ENCODE measurements at regions of chr12 and their contacts with region 1.

Region 1: DNA sequence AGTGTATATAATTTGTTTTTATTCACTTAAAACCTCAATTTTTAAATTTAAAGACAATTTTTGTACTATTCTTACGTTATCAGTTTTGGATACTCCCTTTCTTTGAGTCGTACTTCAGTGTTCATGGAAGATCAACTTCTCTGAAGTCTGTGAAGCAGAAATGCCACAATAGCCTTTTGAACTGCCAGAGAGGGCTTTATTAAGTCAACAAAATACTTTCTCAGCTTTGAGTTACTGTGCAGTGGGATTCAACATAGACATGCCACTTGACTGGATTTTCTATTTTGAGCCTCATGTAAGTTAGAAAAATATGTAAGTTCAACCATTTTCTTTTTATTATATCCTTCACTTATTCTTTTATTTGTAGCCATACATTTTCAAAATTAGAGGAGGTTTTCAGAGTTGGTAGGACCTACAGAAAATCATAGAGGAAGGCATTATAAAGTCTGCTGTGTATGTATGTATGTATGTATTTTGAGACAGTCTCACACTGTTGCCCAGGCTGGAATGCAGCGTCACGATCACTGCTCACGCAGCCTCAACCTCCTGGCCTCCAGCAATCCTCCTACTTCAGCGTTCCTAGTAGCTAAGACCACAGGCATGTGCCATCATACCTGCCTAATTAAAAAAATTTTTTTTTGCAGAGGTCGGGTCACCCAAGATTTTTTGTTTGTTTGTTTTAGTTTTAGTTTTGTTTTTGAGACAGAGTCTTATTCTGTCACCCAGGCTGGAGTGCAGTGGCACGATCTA is 31.2 kb upstream of the BCAT1 start:
- DNase-seq: no peak
- H3K4me3 ChIP-seq: no peak overlapping the region
- H3K27ac ChIP-seq: no peak overlapping the region
- H3K4me1 ChIP-seq: no peaks in the 10 kb centered on the region
- H3K27me3 ChIP-seq: no peaks in the 10 kb centered on the region
- CTCF ChIP-seq: no peak
- POLR2A ChIP-seq: no peak

Region 2: GRCh38 chr12:24822121-24822899 is 157.8 kb before region 1 on chr12:
- intact Hi-C with region 1: no loop called
- DNase-seq: no peak
- H3K4me3 ChIP-seq: no peak overlapping the region
- H3K27ac ChIP-seq: no peak overlapping the region
- H3K4me1 ChIP-seq: no peaks in the 10 kb centered on the region
- H3K27me3 ChIP-seq: no peaks in the 10 kb centered on the region
- CTCF ChIP-seq: no peak
- POLR2A ChIP-seq: no peak

Region 3: DNA sequence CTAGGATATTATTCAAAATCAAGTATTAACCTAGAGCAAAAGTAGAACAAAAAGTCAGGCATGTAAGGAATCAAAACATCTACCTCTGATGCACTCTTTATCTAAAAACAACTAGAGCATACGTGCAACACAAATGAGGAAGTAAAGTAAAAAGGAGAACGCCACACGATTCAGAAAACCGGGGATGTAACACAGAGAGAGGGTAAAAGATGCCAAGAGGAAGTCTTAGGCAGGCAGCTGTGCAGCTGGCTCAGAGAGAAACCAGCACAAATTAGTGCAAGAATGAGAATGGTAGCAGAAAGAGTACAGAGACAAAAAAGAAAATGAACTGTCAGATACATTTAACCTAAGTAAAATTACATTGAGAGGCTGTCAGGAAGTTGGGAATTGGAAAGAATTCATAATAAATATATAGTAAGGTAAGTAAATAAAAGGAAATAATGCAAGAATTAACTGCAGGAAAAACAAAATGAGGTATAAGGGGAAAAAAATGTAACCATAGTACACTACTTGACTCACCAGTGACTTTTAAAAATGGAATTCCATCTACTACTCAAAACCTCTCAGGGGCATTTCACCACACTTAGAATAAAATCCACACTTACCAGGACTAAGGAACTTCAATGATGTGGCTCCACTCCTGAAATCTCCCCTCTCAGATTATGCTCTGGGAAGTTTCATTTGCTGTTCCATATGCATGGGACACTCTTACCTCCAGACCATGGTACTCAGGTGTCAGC is 48.3 kb before region 1 on chr12:
- intact Hi-C with region 1: no loop called
- DNase-seq: peak in 1 of 7 donors; percentile 18
- H3K4me3 ChIP-seq: no peak overlapping the region
- H3K27ac ChIP-seq: peak overlapping the region in 1 of 5 donors; percentile 18
- H3K4me1 ChIP-seq: no peaks in the 10 kb centered on the region
- H3K27me3 ChIP-seq: no peaks in the 10 kb centered on the region
- CTCF ChIP-seq: no peak
- POLR2A ChIP-seq: no peak

Region 4: GRCh38 chr12:25130741-25131188 is 150.6 kb after region 1 on chr12:
- intact Hi-C with region 1: loop called in 1 of 2 experiments (anchors 10 kb)
- DNase-seq: no peak
- H3K4me3 ChIP-seq: no peak overlapping the region
- H3K27ac ChIP-seq: no peak overlapping the region
- H3K4me1 ChIP-seq: no peaks in the 10 kb centered on the region
- H3K27me3 ChIP-seq: no peaks in the 10 kb centered on the region
- CTCF ChIP-seq: peak; percentile 47 to 80 (median 65)
- POLR2A ChIP-seq: no peak

Region 5: GRCh38 chr12:25397001-25397400 is 416.9 kb after region 1 on chr12:
- intact Hi-C with region 1: loop called in 1 of 2 experiments (anchors 10 kb)
- DNase-seq: no peak
- H3K4me3 ChIP-seq: no peak overlapping the region
- H3K27ac ChIP-seq: no peak overlapping the region
- H3K4me1 ChIP-seq: no peaks in the 10 kb centered on the region
- H3K27me3 ChIP-seq: no peaks in the 10 kb centered on the region
- CTCF ChIP-seq: no peak
- POLR2A ChIP-seq: no peak